HCT116 (cell line): ENCODE measurements at regions of chr1 and their contacts with region 1.

Region 1: DNA sequence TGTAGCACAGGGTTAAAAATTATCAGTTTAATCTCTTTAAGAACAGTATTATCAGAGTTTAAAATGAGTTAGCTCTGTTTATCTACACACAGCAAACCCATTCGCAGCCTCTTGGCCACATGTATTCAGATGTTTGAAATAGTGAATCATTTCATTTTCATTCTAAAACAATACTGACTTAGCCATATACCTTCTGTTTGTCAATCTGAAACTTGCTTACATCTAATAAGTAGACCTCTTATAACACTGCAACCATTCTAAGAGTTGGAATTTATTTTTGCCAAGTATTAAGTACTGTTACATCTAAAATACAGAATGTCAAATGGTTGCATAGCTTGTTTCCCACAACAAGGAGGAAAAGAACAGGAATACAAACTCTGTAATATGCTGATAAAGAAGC is 25.4 kb downstream of the ANGEL2 start:
- DNase-seq: no peak
- ATAC-seq: no peak
- H3K4me3 ChIP-seq: no peak overlapping the region
- H3K27ac ChIP-seq: no peak overlapping the region
- H3K4me1 ChIP-seq: peaks cover 0 to 8% of the 10 kb centered on the region in 2 experiments; a peak in 2 of 4 replicates
- H3K27me3 ChIP-seq: no peaks in the 10 kb centered on the region
- CTCF ChIP-seq: no peak
- POLR2A ChIP-seq: no peak
- RAD21 ChIP-seq: no peak

Region 2: GRCh38 chr1:212070720-212071302 is 919.5 kb before region 1 on chr1:
- CTCF ChIA-PET with region 1: no interaction called
- POLR2A ChIA-PET with region 1: no interaction called
- RAD21 ChIA-PET with region 1: no interaction called
- intact Hi-C with region 1: loop called (anchors 10 kb)
- DNase-seq: peak; percentile 13
- ATAC-seq: peak; percentile 66
- H3K4me3 ChIP-seq: no peak overlapping the region
- H3K27ac ChIP-seq: no peak overlapping the region
- H3K4me1 ChIP-seq: no peaks in the 10 kb centered on the region
- H3K27me3 ChIP-seq: no peaks in the 10 kb centered on the region
- CTCF ChIP-seq: peak; percentile 56 to 87 (median 73)
- POLR2A ChIP-seq: no peak
- RAD21 ChIP-seq: peak; percentile 94

Region 3: GRCh38 chr1:212665241-212666115 is 324.8 kb before region 1 on chr1:
- CTCF ChIA-PET with region 1: interaction called, 9 read pairs
- POLR2A ChIA-PET with region 1: no interaction called
- RAD21 ChIA-PET with region 1: no interaction called
- intact Hi-C with region 1: loop called (anchors 1 kb)
- DNase-seq: peak; percentile 68
- ATAC-seq: peak; percentile 98
- H3K4me3 ChIP-seq: peak overlapping the region; percentile 53 to 64
- H3K27ac ChIP-seq: no peak overlapping the region; the same call in 1 of the 2 replicates
- H3K4me1 ChIP-seq: peaks cover 7 to 20% of the 10 kb centered on the region in 2 experiments; a peak in 3 of 4 replicates
- H3K27me3 ChIP-seq: no peaks in the 10 kb centered on the region
- CTCF ChIP-seq: peak; percentile 84 to 96 (median 84)
- POLR2A ChIP-seq: no peak
- RAD21 ChIP-seq: peak; percentile 95

Region 4: GRCh38 chr1:212749821-212750535 is 240.3 kb before region 1 on chr1:
- CTCF ChIA-PET with region 1: interaction called, 8 read pairs
- POLR2A ChIA-PET with region 1: no interaction called
- RAD21 ChIA-PET with region 1: no interaction called
- intact Hi-C with region 1: loop called (anchors 5 kb)
- DNase-seq: peak; percentile 44
- ATAC-seq: peak; percentile 86
- H3K4me3 ChIP-seq: no peak overlapping the region
- H3K27ac ChIP-seq: no peak overlapping the region
- H3K4me1 ChIP-seq: peaks cover 0 to 6% of the 10 kb centered on the region in 2 experiments; a peak in 3 of 4 replicates
- H3K27me3 ChIP-seq: no peaks in the 10 kb centered on the region
- CTCF ChIP-seq: peak; percentile 58 to 81 (median 67)
- POLR2A ChIP-seq: no peak
- RAD21 ChIP-seq: peak; percentile 57

Region 5: DNA sequence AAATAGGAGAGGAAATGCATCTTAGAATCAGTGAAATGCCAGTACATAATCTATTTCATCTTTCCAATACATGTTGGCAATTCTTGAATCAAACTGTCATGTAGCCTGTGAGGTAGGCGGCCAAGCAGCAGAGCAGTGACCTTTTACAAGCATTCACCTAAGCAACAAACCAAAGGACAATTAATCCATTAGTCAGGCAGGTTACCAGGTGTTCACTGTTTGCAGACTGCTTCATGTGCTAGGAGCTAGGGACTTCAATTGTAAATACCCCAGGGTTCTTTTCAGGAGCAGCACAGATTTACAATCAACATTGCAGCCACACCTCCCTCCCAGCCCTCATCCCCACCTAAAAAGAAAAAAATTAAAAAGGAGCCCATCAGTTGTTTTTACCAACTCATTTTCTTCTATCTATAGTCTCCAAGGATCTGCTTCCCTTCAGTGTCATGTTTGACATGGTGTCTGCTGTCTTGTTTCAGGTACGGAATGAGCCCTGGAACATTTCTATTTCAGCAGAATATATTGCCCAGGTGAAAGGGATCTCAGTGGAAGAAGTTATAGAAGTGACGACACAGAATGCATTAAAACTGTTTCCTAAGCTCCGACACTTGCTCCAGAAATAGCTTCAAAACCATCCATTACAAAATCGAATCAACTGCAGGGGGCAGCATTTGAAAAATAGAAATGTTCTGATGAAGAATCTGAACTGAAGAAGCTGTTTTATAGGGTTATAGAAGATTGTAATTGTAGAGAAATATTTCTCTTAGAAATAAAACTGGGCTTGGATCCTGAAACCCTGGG is 175.5 kb before region 1 on chr1:
- CTCF ChIA-PET with region 1: interaction called, 13 read pairs
- POLR2A ChIA-PET with region 1: no interaction called
- RAD21 ChIA-PET with region 1: no interaction called
- intact Hi-C with region 1: no loop called
- DNase-seq: no peak
- ATAC-seq: no peak
- H3K4me3 ChIP-seq: no peak overlapping the region
- H3K27ac ChIP-seq: no peak overlapping the region
- H3K4me1 ChIP-seq: no peaks in the 10 kb centered on the region; a peak in 1 of 4 replicates
- H3K27me3 ChIP-seq: no peaks in the 10 kb centered on the region
- CTCF ChIP-seq: peak; percentile 11 to 51 (median 25); a peak in 4 of 6 replicates
- POLR2A ChIP-seq: no peak
- RAD21 ChIP-seq: peak; percentile 37

Region 6: GRCh38 chr1:213135572-213135971 is 145.3 kb after region 1 on chr1:
- CTCF ChIA-PET with region 1: no interaction called
- POLR2A ChIA-PET with region 1: no interaction called
- RAD21 ChIA-PET with region 1: no interaction called
- intact Hi-C with region 1: no loop called
- DNase-seq: no peak
- ATAC-seq: no peak
- H3K4me3 ChIP-seq: no peak overlapping the region
- H3K27ac ChIP-seq: no peak overlapping the region
- H3K4me1 ChIP-seq: peaks cover 0 to 8% of the 10 kb centered on the region in 2 experiments; a peak in 2 of 4 replicates
- H3K27me3 ChIP-seq: no peaks in the 10 kb centered on the region
- CTCF ChIP-seq: peak in 1 of 3 experiments; percentile 6; a peak in 1 of 6 replicates
- POLR2A ChIP-seq: no peak
- RAD21 ChIP-seq: peak; percentile 42; the same call in 1 of the 2 replicates